HepG2 (cell line): ENCODE measurements at regions of chr17 and their contacts with region 1.

Region 1: DNA sequence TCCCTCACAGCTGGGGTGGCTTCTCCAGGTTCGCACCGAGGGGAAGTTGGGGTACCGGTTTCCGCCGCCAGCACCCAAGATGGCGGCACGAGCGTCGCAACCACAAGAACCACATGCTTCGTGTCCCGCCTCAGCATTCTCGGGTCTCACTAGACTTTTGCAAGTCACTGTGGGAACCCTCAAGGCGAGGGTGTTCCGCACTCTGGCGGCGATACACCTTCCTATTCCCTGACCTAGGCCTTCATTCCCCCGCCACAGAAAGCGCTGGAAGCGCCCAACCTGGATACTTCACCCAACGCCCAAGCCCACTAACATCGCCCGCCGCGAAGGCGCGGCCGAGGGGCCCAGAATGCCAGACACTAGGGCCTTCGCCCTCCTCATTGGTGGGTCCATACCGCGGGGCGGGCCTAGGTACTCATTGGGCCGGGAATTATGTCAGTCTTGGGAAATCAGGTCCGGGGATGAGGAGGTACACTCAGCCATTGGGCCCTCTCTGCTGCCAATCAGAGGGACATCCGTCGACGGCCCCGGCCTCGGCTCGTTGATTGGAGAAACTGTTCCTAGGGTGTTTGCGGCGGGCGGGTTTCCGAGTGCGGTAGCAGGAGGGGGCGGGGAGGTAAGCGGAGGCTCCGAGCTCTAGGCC is at the start of gene NFE2L1:
- DNase-seq: peak; percentile 99
- ATAC-seq: peak; percentile 91
- H3K4me3 ChIP-seq: peak within 1 kb of the TSS; percentile 81 to 88 (median 85)
- H3K27ac ChIP-seq: peak within 1 kb of the TSS; percentile 97
- H3K4me1 ChIP-seq: peaks cover 62% of the 10 kb centered on the region
- H3K27me3 ChIP-seq: peaks cover 0 to 2% of the 10 kb centered on the region in 2 experiments; a peak in 3 of 5 replicates
- CTCF ChIP-seq: no peak
- EP300 ChIP-seq: 0 out of 4 replicates have a peak, but pooled peaks of 1 of the 2 experiments have one; percentile 2
- POLR2A ChIP-seq: peak in 1 of 2 experiments; percentile 78; a peak in 2 of 4 replicates
- RAD21 ChIP-seq: no peak
- total RNA-seq, gene NFE2L1: 53.7 and 67.0 TPM in 2 replicates

Region 2: GRCh38 chr17:47831003-47831933 is 216.6 kb before region 1 on chr17 and contains the starts of genes LRRC46 and MRPL10:
- CTCF ChIA-PET with region 1: no interaction called
- POLR2A ChIA-PET with region 1: interaction called, 13 read pairs
- in situ Hi-C with region 1: no loop called
- intact Hi-C with region 1: no loop called
- DNase-seq: peak; percentile 91
- ATAC-seq: peak; percentile 95
- H3K4me3 ChIP-seq: peak within 1 kb of the TSS; percentile 81 to 97 (median 82)
- H3K27ac ChIP-seq: peak within 1 kb of the TSS; percentile 69
- H3K4me1 ChIP-seq: peaks cover 23% of the 10 kb centered on the region
- H3K27me3 ChIP-seq: peaks cover 0 to 5% of the 10 kb centered on the region in 2 experiments; a peak in 1 of 5 replicates
- CTCF ChIP-seq: peak; percentile 59
- EP300 ChIP-seq: peak in 1 of 2 experiments; percentile 24; a peak in 1 of 4 replicates
- POLR2A ChIP-seq: peak; percentile 96 to 98
- RAD21 ChIP-seq: peak; percentile 25; the same call in 1 of the 2 replicates
- total RNA-seq, gene LRRC46: 0.09 and 0.13 TPM in 2 replicates
- total RNA-seq, gene MRPL10: 56.7 and 59.7 TPM in 2 replicates

Region 3: GRCh38 chr17:47941236-47941994 is 106.4 kb before region 1 on chr17 and contains the start of gene PNPO:
- CTCF ChIA-PET with region 1: no interaction called
- POLR2A ChIA-PET with region 1: interaction called, 14 read pairs
- in situ Hi-C with region 1: no loop called
- intact Hi-C with region 1: no loop called
- DNase-seq: peak; percentile 100
- ATAC-seq: peak; percentile 96
- H3K4me3 ChIP-seq: peak within 1 kb of the TSS; percentile 75 to 87 (median 76)
- H3K27ac ChIP-seq: peak within 1 kb of the TSS; percentile 95
- H3K4me1 ChIP-seq: peaks cover 75% of the 10 kb centered on the region
- H3K27me3 ChIP-seq: no peaks in the 10 kb centered on the region
- CTCF ChIP-seq: peak; percentile 35; the same call in 1 of the 2 replicates
- EP300 ChIP-seq: no peak; a peak in 1 of 4 replicates
- POLR2A ChIP-seq: peak; percentile 73 to 81; a peak in 3 of 4 replicates
- RAD21 ChIP-seq: peak; percentile 69
- total RNA-seq, gene PNPO: 63.3 and 110 TPM in 2 replicates

Region 4: DNA sequence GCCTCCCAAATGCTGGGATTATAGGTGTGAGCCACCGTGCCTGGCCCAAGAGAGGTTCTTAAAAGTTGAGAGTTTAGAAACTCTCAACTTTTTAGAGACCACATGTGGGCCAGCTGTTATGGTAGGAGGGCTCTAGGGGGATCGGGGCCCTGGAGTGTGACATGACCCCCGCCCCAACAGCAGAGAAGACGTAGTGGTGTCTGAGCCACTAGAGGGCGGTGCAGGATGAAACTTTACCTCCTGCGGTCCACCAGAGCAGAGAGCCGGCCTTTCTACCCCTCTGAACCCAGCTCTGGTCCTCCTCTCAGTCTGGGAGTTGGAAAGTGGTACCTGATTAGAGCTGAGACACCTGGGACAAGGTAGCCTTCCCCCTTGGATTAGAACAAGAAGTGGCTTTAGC is 69.5 kb before region 1 on chr17:
- CTCF ChIA-PET with region 1: no interaction called
- POLR2A ChIA-PET with region 1: no interaction called
- in situ Hi-C with region 1: no loop called
- intact Hi-C with region 1: no loop called
- DNase-seq: peak; percentile 51
- ATAC-seq: peak; percentile 89
- H3K4me3 ChIP-seq: no peak overlapping the region
- H3K27ac ChIP-seq: no peak overlapping the region
- H3K4me1 ChIP-seq: no peaks in the 10 kb centered on the region
- H3K27me3 ChIP-seq: no peaks in the 10 kb centered on the region
- CTCF ChIP-seq: peak; percentile 87
- EP300 ChIP-seq: no peak
- POLR2A ChIP-seq: no peak
- RAD21 ChIP-seq: peak; percentile 81

Region 5: DNA sequence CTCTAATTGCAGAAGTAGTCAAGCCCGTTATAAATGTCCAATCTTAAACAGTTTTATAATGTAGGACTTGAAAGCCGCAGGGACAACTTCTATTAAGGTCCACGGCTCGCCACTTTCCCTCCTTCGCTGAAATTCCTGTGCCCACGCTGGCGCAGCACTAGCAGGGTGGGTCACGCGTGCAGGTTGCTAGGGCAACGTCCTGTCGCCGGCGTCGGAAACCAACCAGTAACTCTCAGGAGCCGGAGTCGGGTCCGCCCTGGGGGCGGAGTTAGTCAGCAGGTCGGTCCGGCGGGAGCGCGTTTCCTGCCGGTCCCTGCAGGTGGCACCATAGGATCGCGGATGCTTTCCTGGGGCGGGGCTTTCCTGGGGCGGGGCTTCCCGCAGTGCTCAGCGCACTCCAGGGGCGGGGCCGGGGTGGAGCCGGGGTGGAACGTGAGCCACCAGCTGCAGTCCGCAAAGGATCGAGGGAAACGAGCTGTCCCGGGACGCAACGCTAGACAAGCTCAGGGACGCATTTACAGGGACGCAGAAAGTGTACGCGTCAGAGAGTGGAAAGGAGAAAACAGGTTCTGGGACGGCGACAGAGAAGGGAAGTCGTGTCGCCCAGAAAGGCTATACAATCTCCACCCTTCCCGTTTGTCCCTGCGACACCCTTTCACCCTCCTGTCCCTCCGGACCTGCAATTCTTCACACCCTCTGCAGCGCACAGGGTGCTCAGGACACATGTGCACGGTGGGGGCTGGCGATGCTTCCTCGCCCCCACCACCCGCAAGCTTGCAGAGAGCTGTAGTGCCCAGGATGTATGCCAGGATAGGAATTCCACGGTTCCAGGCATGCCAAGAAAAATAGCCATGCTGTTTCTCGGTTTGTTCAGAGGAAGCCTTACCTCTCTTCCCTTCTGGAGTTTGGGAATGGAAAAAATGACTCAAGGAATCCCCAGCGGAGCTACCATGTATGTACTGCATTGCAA is 22.6 kb before region 1 on chr17:
- CTCF ChIA-PET with region 1: no interaction called
- POLR2A ChIA-PET with region 1: interaction called, 35 read pairs
- in situ Hi-C with region 1: no loop called
- intact Hi-C with region 1: loop called (anchors 1 kb)
- DNase-seq: peak; percentile 94
- ATAC-seq: peak; percentile 82
- H3K4me3 ChIP-seq: peak overlapping the region; percentile 52 to 77 (median 57)
- H3K27ac ChIP-seq: no peak overlapping the region
- H3K4me1 ChIP-seq: peaks cover 41% of the 10 kb centered on the region
- H3K27me3 ChIP-seq: peaks cover 4 to 27% of the 10 kb centered on the region in 2 experiments
- CTCF ChIP-seq: peak; percentile 99
- EP300 ChIP-seq: 0 out of 4 replicates have a peak, but pooled peaks of 1 of the 2 experiments have one; percentile 40
- POLR2A ChIP-seq: no peak
- RAD21 ChIP-seq: peak; percentile 99

Region 6: GRCh38 chr17:48068491-48068961 is 20.7 kb after region 1 on chr17:
- CTCF ChIA-PET with region 1: no interaction called
- POLR2A ChIA-PET with region 1: interaction called, 56 read pairs
- in situ Hi-C with region 1: no loop called
- intact Hi-C with region 1: no loop called
- DNase-seq: peak; percentile 41
- ATAC-seq: peak; percentile 92
- H3K4me3 ChIP-seq: no peak overlapping the region
- H3K27ac ChIP-seq: no peak overlapping the region
- H3K4me1 ChIP-seq: peaks cover 48% of the 10 kb centered on the region
- H3K27me3 ChIP-seq: no peaks in the 10 kb centered on the region
- CTCF ChIP-seq: peak; percentile 32
- EP300 ChIP-seq: no peak
- POLR2A ChIP-seq: no peak
- RAD21 ChIP-seq: 0 out of 2 replicates have a peak, but pooled peaks have one; percentile 26

Region 7: GRCh38 chr17:48101012-48101720 is 53.3 kb after region 1 on chr17 and contains the start of gene CBX1:
- CTCF ChIA-PET with region 1: no interaction called
- POLR2A ChIA-PET with region 1: interaction called, 19 read pairs
- in situ Hi-C with region 1: no loop called
- intact Hi-C with region 1: no loop called
- DNase-seq: peak; percentile 93
- ATAC-seq: peak; percentile 96
- H3K4me3 ChIP-seq: peak within 1 kb of the TSS; percentile 90
- H3K27ac ChIP-seq: peak within 1 kb of the TSS; percentile 84
- H3K4me1 ChIP-seq: peaks cover 27% of the 10 kb centered on the region
- H3K27me3 ChIP-seq: no peaks in the 10 kb centered on the region
- CTCF ChIP-seq: peak; percentile 30
- EP300 ChIP-seq: peak; percentile 30 to 39; a peak in 1 of 4 replicates
- POLR2A ChIP-seq: peak; percentile 69 to 91
- RAD21 ChIP-seq: peak; percentile 49; the same call in 1 of the 2 replicates
- total RNA-seq, gene CBX1: 108 and 143 TPM in 2 replicates

Region 8: GRCh38 chr17:48169926-48170325 is 122.1 kb after region 1 on chr17:
- CTCF ChIA-PET with region 1: no interaction called
- POLR2A ChIA-PET with region 1: no interaction called
- in situ Hi-C with region 1: no loop called
- intact Hi-C with region 1: no loop called
- DNase-seq: no peak
- ATAC-seq: no peak
- H3K4me3 ChIP-seq: no peak overlapping the region
- H3K27ac ChIP-seq: no peak overlapping the region
- H3K4me1 ChIP-seq: no peaks in the 10 kb centered on the region
- H3K27me3 ChIP-seq: peaks cover 2 to 7% of the 10 kb centered on the region in 2 experiments; a peak in 4 of 5 replicates
- CTCF ChIP-seq: no peak
- EP300 ChIP-seq: no peak
- POLR2A ChIP-seq: no peak
- RAD21 ChIP-seq: no peak

Region 9: GRCh38 chr17:48892940-48893645 is 845.2 kb after region 1 on chr17:
- CTCF ChIA-PET with region 1: no interaction called
- POLR2A ChIA-PET with region 1: interaction called, 10 read pairs
- in situ Hi-C with region 1: no loop called
- intact Hi-C with region 1: no loop called
- DNase-seq: no peak
- ATAC-seq: peak; percentile 12
- H3K4me3 ChIP-seq: peak overlapping the region; percentile 76 to 97 (median 81)
- H3K27ac ChIP-seq: peak overlapping the region; percentile 84
- H3K4me1 ChIP-seq: peaks cover 52% of the 10 kb centered on the region
- H3K27me3 ChIP-seq: no peaks in the 10 kb centered on the region; a peak in 1 of 5 replicates
- CTCF ChIP-seq: 0 out of 2 replicates have a peak, but pooled peaks have one; percentile 2
- EP300 ChIP-seq: no peak
- POLR2A ChIP-seq: peak in 1 of 2 experiments; percentile 0; a peak in 1 of 4 replicates
- RAD21 ChIP-seq: peak; percentile 69